Body of pancreas (tissue), 4 donors: ENCODE measurements at regions of chr12 and their contacts with region 1.

Region 1: DNA sequence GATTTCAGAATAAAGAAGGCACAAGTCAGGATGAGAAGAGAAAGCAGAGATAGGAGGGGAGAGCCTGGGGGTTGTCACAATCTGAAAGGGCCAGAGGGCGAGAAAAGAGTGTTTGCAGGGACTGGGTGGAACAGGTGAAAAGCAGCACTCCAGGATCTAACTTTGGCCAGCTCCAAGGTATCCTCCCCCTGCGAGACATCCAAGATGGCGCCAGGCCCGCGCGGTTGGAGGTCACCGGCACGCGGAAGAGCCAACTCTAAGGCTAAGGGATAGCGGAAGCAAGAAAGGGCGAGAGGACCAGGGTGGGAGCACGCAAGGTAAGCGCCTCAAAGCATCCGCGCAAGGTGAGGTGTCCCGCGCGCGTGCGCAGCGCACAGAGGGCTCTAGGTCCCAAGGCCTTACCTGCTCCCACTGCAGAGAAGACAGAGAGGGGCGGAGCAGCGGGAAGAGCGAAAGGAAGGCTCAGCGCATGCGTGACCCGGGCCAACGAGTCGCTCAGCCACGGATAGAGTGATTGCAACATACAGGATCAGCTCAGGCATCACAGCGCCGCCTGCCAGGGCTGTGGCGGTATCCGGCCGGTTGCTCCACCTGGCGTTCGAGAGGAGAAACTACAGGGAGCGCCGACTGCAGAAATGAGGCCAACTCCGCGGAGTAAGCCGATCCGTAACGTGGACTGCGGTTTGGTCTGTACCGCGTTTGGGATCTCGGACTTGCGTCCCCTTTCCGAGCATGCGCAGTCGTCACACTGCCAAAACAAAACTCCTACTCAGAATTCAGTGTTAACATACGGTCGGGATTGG is at the start of gene ATP5MC2:
- DNase-seq: peak; percentile 97 to 99 (median 98)
- ATAC-seq: peak; percentile 96
- H3K4me3 ChIP-seq: peak within 1 kb of the TSS; percentile 33 to 74
- H3K27ac ChIP-seq: peak within 1 kb of the TSS; percentile 81 to 91 (median 88)
- H3K4me1 ChIP-seq: peaks cover 30% of the 10 kb centered on the region
- H3K27me3 ChIP-seq: no peaks in the 10 kb centered on the region
- CTCF ChIP-seq: peak; percentile 93 to 100 (median 100)
- POLR2A ChIP-seq: peak in 2 of 3 donors; percentile 75 to 80
- total RNA-seq, gene ATP5MC2: 94.3 to 143 TPM

Region 2: GRCh38 chr12:53543539-53543938 is 132.3 kb before region 1 on chr12:
- intact Hi-C with region 1: loop called (anchors 10 kb)
- DNase-seq: peak; percentile 45 to 70 (median 58)
- ATAC-seq: peak; percentile 76
- H3K4me3 ChIP-seq: no peak overlapping the region
- H3K27ac ChIP-seq: peak overlapping the region in 3 of 4 donors; percentile 25 to 55 (median 43)
- H3K4me1 ChIP-seq: peaks cover 18% of the 10 kb centered on the region
- H3K27me3 ChIP-seq: no peaks in the 10 kb centered on the region
- CTCF ChIP-seq: peak; percentile 37 to 97 (median 76)
- POLR2A ChIP-seq: no peak

Region 3: DNA sequence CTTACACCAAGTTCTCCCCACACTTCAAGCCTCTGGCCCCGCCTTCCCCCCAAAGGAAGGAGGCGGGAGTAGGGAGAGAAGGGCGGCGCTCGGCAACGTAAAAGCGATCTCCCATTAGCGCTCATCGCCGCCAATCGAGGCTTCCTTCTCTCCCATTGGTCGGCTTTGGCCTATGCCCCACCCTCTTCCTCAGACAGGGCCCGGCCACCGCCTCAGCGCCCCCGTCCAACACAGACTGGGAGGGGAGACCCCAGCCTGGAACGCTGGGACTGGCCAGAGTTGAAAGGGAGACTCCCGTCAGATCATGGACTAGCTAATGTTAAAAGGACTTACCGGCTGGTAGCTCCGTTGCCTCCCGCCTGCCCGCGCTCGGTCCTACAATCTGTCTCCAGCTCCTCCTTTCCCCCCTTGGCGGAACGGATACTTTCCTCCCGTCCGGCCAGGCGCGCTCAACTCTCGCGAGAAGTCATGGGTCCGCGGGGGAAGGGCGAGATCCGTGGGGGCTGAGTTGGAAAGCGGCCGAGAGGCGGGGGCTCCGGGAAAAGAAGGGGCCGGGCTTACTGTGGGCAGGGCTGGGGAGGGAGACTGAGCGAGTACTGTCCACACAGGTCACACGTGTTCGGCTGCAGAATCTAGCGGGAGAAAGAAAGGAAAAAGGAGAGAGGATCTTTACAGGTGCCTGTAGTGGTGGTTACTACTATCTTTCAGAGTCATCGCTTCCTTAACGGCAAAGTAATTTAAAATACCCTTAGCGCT is 49.7 kb before region 1 on chr12 and contains the start of gene ATF7:
- intact Hi-C with region 1: loop called (anchors 10 kb)
- DNase-seq: peak; percentile 97 to 99 (median 98)
- ATAC-seq: peak; percentile 97
- H3K4me3 ChIP-seq: peak within 1 kb of the TSS; percentile 34 to 74
- H3K27ac ChIP-seq: peak within 1 kb of the TSS; percentile 92 to 94 (median 92)
- H3K4me1 ChIP-seq: peaks cover 34% of the 10 kb centered on the region
- H3K27me3 ChIP-seq: no peaks in the 10 kb centered on the region
- CTCF ChIP-seq: no peak
- POLR2A ChIP-seq: peak in 2 of 3 donors; percentile 77 to 82
- total RNA-seq, gene ATF7: 12.9 to 21.3 TPM

Region 4: DNA sequence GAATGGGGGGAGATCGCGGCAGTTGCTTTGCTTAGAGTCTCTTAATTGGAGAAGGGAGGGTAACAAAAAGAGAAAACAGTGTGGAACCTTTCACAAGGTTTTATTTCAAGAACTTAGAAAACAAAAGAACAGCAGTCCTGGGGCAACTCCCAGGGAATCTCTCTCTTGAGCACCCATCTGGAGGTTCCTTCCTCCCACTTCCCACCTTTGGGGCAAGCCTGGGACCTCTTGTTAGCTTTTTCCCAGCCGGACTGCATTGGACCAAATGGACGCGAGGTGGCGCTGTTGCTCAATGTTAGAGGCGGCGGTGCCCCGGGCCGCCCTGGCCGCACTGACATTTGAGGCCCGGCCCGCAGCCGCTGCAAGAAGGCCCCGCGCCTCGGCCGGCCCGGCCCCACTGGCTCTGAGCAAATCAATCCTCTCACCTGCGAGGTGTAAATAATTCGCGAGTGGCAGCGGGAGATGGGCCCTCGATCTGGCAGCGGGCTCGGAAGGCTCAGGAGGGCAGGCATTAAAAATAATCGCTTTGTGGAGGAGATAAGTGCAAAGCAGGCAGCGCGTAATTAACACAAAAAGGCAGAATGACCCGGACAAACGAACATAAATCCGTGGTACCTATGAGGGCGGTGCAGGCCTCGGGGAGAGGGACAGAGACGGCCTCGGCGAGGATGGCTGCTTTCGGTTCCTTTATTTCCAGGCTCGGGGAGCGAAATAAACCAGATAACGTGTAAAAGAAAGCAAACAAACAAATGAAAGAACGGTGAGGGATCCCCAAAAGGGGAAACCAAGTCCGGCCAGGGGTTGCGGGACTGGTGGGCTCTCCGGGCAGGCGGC is 330.2 kb after region 1 on chr12:
- intact Hi-C with region 1: no loop called
- DNase-seq: peak; percentile 86 to 93 (median 90)
- ATAC-seq: peak; percentile 83
- H3K4me3 ChIP-seq: no peak overlapping the region
- H3K27ac ChIP-seq: no peak overlapping the region
- H3K4me1 ChIP-seq: peaks cover 17% of the 10 kb centered on the region
- H3K27me3 ChIP-seq: peaks cover 0 to 72% of the 10 kb centered on the region in 2 donors
- CTCF ChIP-seq: peak; percentile 88 to 97 (median 95)
- POLR2A ChIP-seq: no peak

Region 5: DNA sequence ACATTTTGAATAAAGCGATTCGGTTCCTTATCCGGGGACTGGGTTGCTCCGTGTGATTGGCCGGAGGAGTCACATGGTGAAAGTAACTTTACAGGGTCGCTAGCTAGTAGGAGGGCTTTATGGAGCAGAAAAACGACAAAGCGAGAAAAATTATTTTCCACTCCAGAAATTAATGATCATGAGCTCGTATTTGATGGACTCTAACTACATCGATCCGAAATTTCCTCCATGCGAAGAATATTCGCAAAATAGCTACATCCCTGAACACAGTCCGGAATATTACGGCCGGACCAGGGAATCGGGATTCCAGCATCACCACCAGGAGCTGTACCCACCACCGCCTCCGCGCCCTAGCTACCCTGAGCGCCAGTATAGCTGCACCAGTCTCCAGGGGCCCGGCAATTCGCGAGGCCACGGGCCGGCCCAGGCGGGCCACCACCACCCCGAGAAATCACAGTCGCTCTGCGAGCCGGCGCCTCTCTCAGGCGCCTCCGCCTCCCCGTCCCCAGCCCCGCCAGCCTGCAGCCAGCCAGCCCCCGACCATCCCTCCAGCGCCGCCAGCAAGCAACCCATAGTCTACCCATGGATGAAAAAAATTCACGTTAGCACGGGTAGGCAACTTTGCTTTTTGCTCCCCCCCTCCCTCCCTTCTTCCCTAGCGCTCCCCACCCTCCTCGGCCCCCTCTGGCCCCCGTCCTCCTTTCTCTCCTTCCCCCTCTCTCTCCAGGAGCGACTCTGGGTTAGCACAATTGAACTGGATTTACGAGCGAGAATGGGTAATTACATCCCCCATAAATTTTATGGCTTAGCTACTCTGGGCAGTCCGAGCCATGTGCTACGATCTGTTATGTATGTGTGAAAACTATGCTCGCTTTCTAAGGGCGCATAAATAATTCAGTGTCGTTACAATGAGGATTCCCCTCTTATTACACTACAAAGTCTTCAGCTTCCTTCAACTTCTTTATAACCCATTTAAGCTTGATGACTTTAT is 378.2 kb after region 1 on chr12 and contains the start of gene HOXC4:
- intact Hi-C with region 1: no loop called
- DNase-seq: peak in 1 of 4 donors; percentile 33
- ATAC-seq: peak; percentile 43
- H3K4me3 ChIP-seq: peak within 1 kb of the TSS in 1 of 2 donors; percentile 11
- H3K27ac ChIP-seq: no peak within 1 kb of the TSS
- H3K4me1 ChIP-seq: peaks cover 10% of the 10 kb centered on the region
- H3K27me3 ChIP-seq: peaks cover 0 to 14% of the 10 kb centered on the region in 2 donors
- CTCF ChIP-seq: no peak
- POLR2A ChIP-seq: no peak
- total RNA-seq, gene HOXC4: not detected